HEK293T (cell line): ENCODE measurements at regions of chr1 and their contacts with region 1.

Region 1: DNA sequence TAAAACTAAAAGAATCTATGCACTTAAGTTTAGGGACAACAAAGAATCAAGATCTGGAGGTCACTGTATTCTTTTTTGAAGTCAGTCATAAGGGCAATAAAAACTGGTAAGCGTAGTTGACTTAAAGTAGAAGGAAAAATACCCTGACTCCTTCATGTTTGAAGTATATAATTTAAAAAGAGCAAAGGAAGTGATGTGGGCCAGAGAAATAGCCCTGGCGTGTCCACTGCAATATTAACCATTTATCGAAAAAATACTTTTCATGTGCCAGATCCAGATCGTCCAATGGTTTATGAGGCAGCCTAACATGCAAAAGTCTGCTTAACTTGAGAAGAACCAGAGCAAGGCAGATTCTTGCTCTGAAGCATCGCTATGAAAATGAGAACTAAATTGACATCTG is 162.0 kb downstream of the COQ8A start:
- DNase-seq: no peak

Region 2: DNA sequence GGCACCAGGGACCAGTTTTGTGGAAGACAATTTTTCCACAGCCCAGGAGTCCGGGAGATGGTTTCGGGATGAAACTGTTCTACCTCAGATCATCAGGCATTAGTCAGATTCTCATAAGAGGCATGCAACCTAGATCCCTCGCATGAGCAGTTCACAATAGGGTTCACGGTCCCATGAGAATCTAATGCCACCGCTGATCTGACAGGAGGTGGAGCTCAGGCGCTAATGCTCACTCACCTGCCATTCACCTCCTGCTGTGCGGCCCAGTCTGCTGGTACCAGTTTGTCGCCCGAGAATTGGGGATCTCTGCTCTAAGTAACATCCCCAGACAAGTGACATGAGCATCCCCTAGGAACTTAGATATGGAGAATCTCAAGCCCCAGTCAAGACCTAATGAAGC is 18.8 kb after region 1 on chr1:
- CTCF ChIA-PET with region 1: no interaction called
- POLR2A ChIA-PET with region 1: no interaction called
- DNase-seq: no peak

Region 3: DNA sequence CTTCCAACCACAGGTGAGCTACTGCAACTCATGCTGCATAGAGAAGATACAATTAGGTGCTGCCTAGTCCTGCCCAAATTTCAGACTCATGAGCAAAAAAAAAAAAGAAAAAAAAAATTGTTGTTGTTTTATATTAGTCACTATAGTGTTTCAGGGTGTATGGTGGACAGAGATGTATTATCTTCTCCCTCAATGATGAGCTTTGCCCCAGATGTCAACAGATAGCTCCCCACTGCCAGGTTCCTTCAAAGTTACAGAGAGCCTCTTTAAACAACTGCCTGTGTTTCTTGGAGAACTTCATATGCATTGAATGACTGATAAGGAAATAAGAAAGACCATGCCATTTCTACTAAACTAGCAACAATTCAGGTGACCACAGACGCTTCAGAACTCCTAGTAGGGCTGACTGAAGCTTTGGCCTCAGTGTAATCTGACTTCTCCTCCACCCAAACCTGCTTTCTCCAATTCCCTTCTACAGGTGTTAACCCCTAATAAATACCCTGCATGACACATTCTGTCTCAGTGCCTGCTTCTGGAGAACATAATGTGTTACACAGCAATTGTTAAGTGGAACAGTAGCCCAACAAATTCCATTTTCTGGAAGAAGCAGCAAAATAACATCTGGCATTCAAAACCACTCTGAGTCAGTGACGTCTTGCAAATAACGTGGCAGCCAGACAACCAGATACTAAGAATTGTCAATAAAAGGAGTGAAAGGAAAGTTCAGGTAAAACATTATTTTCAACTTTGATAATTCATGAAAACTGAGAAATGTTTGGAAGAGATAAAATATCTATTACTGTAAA is 68.5 kb after region 1 on chr1:
- CTCF ChIA-PET with region 1: interaction called, 10 read pairs
- POLR2A ChIA-PET with region 1: no interaction called
- DNase-seq: no peak